ENCODE measurements at regions of chr12 and their contacts with region 1.

Region 1: DNA sequence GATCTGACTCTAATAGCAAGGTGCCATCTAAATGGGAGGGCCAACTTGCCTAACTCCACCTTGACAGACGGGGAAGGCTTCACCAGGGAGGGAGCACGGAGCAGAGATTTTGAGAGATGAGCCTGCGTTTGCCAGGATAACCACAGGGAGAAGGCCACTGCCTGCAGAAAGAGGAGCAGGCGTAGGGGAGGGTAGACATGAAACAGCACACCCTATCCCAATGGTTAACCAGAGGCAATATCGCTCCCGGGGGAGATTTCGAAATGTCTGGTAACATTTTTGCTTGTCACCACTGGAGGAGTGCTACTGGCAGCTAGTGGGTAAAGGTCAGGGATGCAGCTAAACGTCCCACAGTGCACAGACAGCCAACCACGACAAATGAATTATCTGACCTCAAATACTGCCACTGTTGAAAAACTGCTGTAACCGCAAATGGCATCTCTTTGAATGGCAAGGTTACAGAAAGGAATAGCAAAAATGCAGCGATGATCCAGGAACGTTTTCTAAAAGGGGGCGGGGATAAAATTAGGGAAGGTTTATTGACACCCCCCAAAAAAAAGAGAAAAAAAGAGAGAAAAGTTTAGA is 126.0 kb upstream of the ATF7IP start:
- DNase-seq: peak; percentile 75
- H3K4me3 ChIP-seq: peak overlapping the region; percentile 57
- H3K27ac ChIP-seq: peak overlapping the region; percentile 94
- H3K4me1 ChIP-seq: peaks cover 32% of the 10 kb centered on the region
- CTCF ChIP-seq: peak; percentile 60

Region 2: DNA sequence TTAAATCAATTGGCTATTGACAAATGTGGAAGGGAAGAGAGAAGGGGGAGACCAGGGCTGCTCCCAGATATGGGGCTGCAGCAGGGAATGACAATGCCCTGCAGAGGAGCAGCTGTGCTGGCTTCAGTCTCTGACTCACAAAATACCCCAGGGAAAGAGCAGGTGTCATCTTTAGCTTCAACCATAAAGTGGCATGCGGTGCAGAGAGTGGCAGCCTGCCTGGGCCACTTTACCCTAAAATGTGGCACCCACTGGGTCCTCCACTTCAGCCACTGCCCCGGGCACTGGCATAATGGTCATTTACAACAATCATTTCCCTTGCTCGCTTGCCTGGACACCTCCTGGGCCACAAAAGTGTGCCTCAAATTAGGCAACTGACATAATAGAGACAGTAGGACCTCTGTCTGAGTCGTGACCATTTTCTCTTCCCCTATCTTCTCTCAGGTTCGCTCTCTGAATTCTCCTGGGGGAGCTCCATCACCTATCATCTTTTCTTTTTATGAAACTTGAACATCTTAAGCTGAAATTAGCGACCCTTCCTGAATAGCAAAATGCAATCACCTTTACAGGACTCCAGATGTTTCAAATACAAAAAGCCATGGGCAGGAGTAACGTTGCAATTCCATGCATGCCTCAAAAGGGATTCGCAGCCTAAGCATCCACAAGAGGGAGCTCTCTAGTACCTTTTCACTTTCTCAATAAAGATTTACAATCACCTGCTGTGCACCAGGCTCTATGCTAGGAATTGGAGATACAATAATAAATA is 53.8 kb before region 1 on chr12:
- CTCF ChIA-PET with region 1: interaction called, 4 read pairs
- POLR2A ChIA-PET with region 1: no interaction called
- intact Hi-C with region 1: loop called (anchors 5 kb)
- DNase-seq: peak; percentile 75
- H3K4me3 ChIP-seq: no peak overlapping the region
- H3K27ac ChIP-seq: no peak overlapping the region
- H3K4me1 ChIP-seq: peaks cover 23% of the 10 kb centered on the region
- CTCF ChIP-seq: peak; percentile 96

Region 3: GRCh38 chr12:14284184-14284722 is 44.8 kb after region 1 on chr12:
- CTCF ChIA-PET with region 1: no interaction called
- POLR2A ChIA-PET with region 1: interaction called, 7 read pairs
- intact Hi-C with region 1: loop called (anchors 1 kb)
- DNase-seq: peak; percentile 71
- H3K4me3 ChIP-seq: peak overlapping the region; percentile 60
- H3K27ac ChIP-seq: peak overlapping the region; percentile 95
- H3K4me1 ChIP-seq: peaks cover 58% of the 10 kb centered on the region
- CTCF ChIP-seq: peak; percentile 53

Region 4: GRCh38 chr12:14454098-14454907 is 214.9 kb after region 1 on chr12:
- CTCF ChIA-PET with region 1: interaction called, 7 read pairs
- POLR2A ChIA-PET with region 1: interaction called, 4 read pairs
- intact Hi-C with region 1: loop called (anchors 1 kb)
- DNase-seq: peak; percentile 83
- H3K4me3 ChIP-seq: no peak overlapping the region
- H3K27ac ChIP-seq: no peak overlapping the region
- H3K4me1 ChIP-seq: peaks cover 10% of the 10 kb centered on the region
- CTCF ChIP-seq: peak; percentile 97

Region 5: DNA sequence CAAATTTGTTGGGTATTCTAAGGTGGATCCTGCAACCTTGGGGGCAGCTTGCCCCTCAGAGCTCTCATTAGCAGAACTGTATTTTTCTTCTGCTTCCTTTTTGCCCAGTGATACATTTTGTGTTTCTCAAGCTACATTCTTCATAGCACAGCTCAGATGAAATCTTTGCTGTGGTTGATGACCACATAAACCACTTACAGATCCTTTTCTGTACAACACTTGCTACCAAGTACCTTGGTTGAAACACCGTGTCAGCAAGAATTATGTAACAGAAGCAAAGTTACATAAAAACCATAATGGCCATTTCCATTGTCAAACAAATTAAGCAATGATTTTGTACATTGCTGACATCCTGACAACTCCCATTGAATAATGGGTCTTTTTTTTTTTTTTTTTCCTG is 337.9 kb after region 1 on chr12:
- CTCF ChIA-PET with region 1: no interaction called
- POLR2A ChIA-PET with region 1: interaction called, 3 read pairs
- intact Hi-C with region 1: loop called (anchors 5 kb)
- DNase-seq: peak; percentile 79
- H3K4me3 ChIP-seq: peak overlapping the region; percentile 41
- H3K27ac ChIP-seq: peak overlapping the region; percentile 93
- H3K4me1 ChIP-seq: peaks cover 62% of the 10 kb centered on the region
- CTCF ChIP-seq: no peak

Region 6: GRCh38 chr12:14629832-14630710 is 390.6 kb after region 1 on chr12:
- CTCF ChIA-PET with region 1: interaction called, 3 read pairs
- POLR2A ChIA-PET with region 1: interaction called, 6 read pairs
- intact Hi-C with region 1: loop called (anchors 5 kb)
- DNase-seq: peak; percentile 82
- H3K4me3 ChIP-seq: no peak overlapping the region
- H3K27ac ChIP-seq: no peak overlapping the region
- H3K4me1 ChIP-seq: peaks cover 28% of the 10 kb centered on the region
- CTCF ChIP-seq: peak; percentile 99

Region 7: DNA sequence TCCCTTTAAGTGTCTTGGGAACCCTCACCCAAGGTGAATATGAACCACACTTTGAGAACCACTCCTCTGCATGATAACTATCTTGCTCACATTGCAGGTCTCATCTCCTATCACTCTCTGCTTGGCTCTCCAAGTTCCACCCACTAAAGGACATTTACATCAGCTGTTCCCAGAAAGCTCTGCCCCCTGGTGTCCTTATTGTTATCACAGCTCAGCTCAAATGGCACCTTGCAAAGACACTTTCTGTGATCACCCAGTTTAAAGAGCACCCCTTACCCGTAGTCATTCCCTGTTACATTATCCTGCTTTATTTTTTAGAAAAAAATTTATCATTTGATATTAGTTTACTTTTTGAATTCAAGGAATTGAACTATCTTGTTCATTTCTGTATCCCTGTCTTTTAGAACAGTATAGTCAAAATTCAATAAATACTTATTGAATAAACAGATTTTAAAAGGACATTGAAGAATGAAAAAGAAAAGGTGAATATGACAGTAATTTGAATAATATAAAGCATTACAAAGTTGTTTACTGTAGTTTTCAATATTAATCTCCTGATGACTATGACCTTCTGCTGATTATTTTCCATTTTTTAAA is 477.5 kb after region 1 on chr12:
- CTCF ChIA-PET with region 1: no interaction called
- POLR2A ChIA-PET with region 1: interaction called, 3 read pairs
- intact Hi-C with region 1: loop called (anchors 1 kb)
- DNase-seq: peak; percentile 73
- H3K4me3 ChIP-seq: no peak overlapping the region
- H3K27ac ChIP-seq: no peak overlapping the region
- H3K4me1 ChIP-seq: peaks cover 6% of the 10 kb centered on the region
- CTCF ChIP-seq: peak; percentile 86

Measured in OCI-LY7 (cell line).